ENCODE measurements at regions of chr5 and their contacts with region 1.

Region 1: GRCh38 chr5:148383564-148384379 is at the start of gene FBXO38:
- DNase-seq: peak; percentile 94 to 97
- ATAC-seq: peak; percentile 99 to 100
- H3K4me3 ChIP-seq: peak within 1 kb of the TSS; percentile 71 to 89 (median 78)
- H3K27ac ChIP-seq: peak within 1 kb of the TSS; percentile 84 to 92 (median 88)
- H3K4me1 ChIP-seq: peaks cover 22 to 34% of the 10 kb centered on the region in 2 donors
- H3K27me3 ChIP-seq: no peaks in the 10 kb centered on the region
- CTCF ChIP-seq: peak in 1 of 5 experiments; percentile 24
- POLR2A ChIP-seq: peak; percentile 75 to 78
- total RNA-seq, gene FBXO38: 31.1 to 49.6 (median 34.1) TPM

Region 2: GRCh38 chr5:147935032-147935431 is 448.7 kb before region 1 on chr5:
- in situ Hi-C with region 1: no loop called
- intact Hi-C with region 1: no loop called
- DNase-seq: no peak
- ATAC-seq: peak; percentile 76 to 93
- H3K4me3 ChIP-seq: no peak overlapping the region
- H3K27ac ChIP-seq: no peak overlapping the region
- H3K4me1 ChIP-seq: no peaks in the 10 kb centered on the region
- H3K27me3 ChIP-seq: no peaks in the 10 kb centered on the region
- CTCF ChIP-seq: peak in 2 of 5 experiments; percentile 14 to 54
- POLR2A ChIP-seq: no peak

Region 3: GRCh38 chr5:148406406-148406805 is 22.6 kb after region 1 on chr5:
- in situ Hi-C with region 1: no loop called
- intact Hi-C with region 1: loop called (anchors 2 kb)
- DNase-seq: no peak
- ATAC-seq: no peak
- H3K4me3 ChIP-seq: no peak overlapping the region
- H3K27ac ChIP-seq: no peak overlapping the region
- H3K4me1 ChIP-seq: peaks cover 0 to 6% of the 10 kb centered on the region in 2 donors
- H3K27me3 ChIP-seq: no peaks in the 10 kb centered on the region
- CTCF ChIP-seq: no peak
- POLR2A ChIP-seq: no peak

Region 4: DNA sequence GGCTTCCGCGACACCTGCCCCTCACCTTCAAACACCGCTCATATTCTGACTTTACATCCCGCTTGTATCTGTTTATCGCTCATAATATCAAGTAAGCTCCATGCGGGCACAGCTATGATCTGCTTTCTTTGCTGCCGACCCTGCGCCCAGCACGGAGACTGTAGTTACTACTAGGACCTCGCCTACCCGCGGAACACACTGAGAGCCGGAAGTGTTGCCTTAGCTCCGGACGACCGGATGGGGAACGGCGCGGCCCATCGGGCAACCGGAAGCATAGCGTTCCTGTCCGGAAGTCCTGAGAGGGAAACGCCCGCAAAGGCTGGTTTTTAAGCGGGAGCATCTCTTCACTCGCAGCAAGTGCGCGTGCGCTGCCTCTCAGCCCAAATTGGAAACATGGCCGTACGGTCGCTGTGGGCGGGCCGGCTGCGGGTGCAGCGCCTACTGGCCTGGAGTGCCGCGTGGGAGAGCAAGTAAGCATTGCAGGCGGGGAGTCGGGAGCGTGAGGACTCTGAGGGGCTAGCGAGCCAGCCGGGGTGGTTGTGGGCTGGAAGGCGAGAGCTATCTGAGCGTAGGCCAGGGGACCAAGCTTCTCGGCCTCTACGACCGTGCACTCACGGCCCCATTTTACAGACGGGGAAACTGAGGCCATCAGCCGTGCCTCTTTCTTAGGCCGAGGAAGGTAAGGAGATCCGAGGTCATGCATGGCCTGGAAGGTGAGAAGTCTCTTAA is 961.5 kb after region 1 on chr5 and contains the start of gene GRPEL2:
- in situ Hi-C with region 1: no loop called
- intact Hi-C with region 1: loop called (anchors 10 kb)
- DNase-seq: peak; percentile 93 to 95
- ATAC-seq: peak; percentile 99
- H3K4me3 ChIP-seq: peak within 1 kb of the TSS; percentile 58 to 96 (median 79)
- H3K27ac ChIP-seq: peak within 1 kb of the TSS; percentile 84 to 89 (median 87)
- H3K4me1 ChIP-seq: peaks cover 13 to 16% of the 10 kb centered on the region in 2 donors
- H3K27me3 ChIP-seq: no peaks in the 10 kb centered on the region
- CTCF ChIP-seq: no peak
- POLR2A ChIP-seq: peak; percentile 57 to 69
- total RNA-seq, gene GRPEL2: 7.8 to 13.3 (median 9.9) TPM

Measured in gastrocnemius medialis (tissue), 4 donors.